ENCODE measurements at regions of chr2 and their contacts with region 1.

Region 1: GRCh38 chr2:177296040-177296439 is 31.5 kb upstream of the NFE2L2 start:
- DNase-seq: peak; percentile 42
- H3K4me3 Mint-ChIP-seq: no peak overlapping the region
- H3K27ac Mint-ChIP-seq: no peak overlapping the region
- H3K4me1 Mint-ChIP-seq: no peaks in the 10 kb centered on the region
- H3K27me3 Mint-ChIP-seq: no peaks in the 10 kb centered on the region
- CTCF ChIP-seq: peak; percentile 32

Region 2: GRCh38 chr2:177229448-177230242 is 66.4 kb before region 1 on chr2:
- CTCF ChIA-PET with region 1: interaction called, 4 read pairs
- POLR2A ChIA-PET with region 1: interaction called, 3 read pairs
- intact Hi-C with region 1: loop called (anchors 2 kb)
- DNase-seq: no peak
- H3K4me3 Mint-ChIP-seq: no peak overlapping the region
- H3K27ac Mint-ChIP-seq: peak overlapping the region; percentile 35
- H3K4me1 Mint-ChIP-seq: peaks cover 21% of the 10 kb centered on the region
- H3K27me3 Mint-ChIP-seq: no peaks in the 10 kb centered on the region
- CTCF ChIP-seq: no peak

Region 3: DNA sequence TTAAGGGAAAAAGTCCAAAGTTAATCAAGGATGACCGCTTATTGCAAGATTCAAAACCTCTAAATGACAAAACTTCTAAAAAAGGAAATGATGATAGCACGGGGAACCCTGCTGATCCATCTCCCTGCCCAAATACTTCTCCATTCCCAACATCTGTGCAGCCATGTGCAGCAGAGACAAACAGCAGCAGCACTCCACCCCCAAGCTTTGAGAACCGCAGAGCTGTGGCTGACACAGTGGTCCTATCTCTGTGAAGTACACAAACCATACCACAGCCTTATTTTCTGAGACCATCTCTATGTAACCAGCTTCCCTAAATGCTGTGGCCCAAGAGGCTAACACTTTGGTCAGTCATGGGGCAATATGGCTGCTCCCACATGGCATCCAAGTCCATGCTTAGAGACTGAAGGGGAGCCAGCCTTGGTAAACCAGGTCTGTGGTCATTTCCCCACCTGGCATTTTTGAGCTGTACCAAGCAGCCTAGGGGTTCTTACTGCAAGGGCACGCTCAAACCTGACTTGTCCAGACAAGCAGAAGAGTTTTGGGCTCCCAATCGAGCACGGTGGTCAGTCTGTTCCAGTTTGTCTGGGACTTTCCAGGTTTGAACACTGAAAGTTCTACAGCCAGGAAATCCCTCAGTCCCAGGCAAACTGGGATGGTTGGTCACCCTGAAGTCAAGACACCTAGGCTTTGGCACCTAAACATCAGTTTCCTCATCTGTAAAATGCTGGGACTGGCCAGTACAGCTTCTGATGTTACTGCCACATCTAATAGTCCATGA is 14.4 kb before region 1 on chr2:
- CTCF ChIA-PET with region 1: interaction called, 17 read pairs
- POLR2A ChIA-PET with region 1: interaction called, 20 read pairs
- intact Hi-C with region 1: no loop called
- DNase-seq: peak; percentile 76
- H3K4me3 Mint-ChIP-seq: no peak overlapping the region
- H3K27ac Mint-ChIP-seq: peak overlapping the region; percentile 54
- H3K4me1 Mint-ChIP-seq: peaks cover 10% of the 10 kb centered on the region
- H3K27me3 Mint-ChIP-seq: no peaks in the 10 kb centered on the region
- CTCF ChIP-seq: no peak

Region 4: GRCh38 chr2:177306550-177306949 is 10.5 kb after region 1 on chr2:
- CTCF ChIA-PET with region 1: interaction called, 16 read pairs
- POLR2A ChIA-PET with region 1: interaction called, 6 read pairs
- intact Hi-C with region 1: no loop called
- DNase-seq: peak; percentile 20
- H3K4me3 Mint-ChIP-seq: no peak overlapping the region
- H3K27ac Mint-ChIP-seq: no peak overlapping the region
- H3K4me1 Mint-ChIP-seq: no peaks in the 10 kb centered on the region
- H3K27me3 Mint-ChIP-seq: no peaks in the 10 kb centered on the region
- CTCF ChIP-seq: no peak

Region 5: DNA sequence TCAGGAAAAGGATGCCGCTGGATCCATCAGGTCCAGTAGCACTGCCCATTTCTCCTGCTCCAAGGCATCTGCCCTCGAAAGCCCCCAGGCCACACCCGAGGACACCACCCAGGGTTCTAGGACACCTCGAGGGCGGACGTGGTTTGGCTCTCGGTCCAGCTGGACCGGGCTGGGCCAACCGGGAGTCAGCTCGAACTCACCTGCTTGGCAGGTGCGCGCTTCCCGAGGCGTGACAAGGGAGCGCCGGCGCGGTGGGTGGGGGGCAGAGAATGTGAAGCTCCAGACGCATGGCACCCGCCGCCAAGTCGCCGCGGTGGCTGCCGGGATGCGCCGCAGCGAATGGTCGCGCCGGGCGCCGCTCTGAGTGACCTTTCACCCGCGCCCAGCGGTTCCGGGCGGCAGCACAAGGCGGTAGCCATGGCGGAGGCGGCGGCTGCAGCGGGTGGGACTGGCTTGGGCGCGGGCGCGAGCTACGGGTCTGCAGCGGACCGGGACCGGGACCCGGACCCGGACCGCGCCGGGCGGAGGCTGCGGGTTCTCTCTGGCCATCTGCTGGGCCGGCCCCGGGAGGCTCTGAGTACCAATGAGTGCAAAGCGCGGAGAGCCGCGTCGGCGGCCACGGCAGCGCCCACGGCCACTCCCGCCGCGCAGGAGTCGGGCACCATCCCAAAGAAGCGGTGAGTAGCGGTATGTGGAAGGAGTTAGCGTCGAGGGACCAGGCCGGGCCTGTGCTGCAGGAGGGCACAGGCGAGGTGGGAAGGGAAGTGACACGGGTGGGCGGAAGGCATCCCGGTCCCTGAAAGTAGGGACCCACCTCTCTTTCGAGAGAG is 96.5 kb after region 1 on chr2 and contains the start of gene AGPS:
- CTCF ChIA-PET with region 1: interaction called, 11 read pairs
- POLR2A ChIA-PET with region 1: no interaction called
- intact Hi-C with region 1: no loop called
- DNase-seq: peak; percentile 71
- H3K4me3 Mint-ChIP-seq: peak within 1 kb of the TSS; percentile 96
- H3K27ac Mint-ChIP-seq: peak within 1 kb of the TSS; percentile 97
- H3K4me1 Mint-ChIP-seq: peaks cover 48% of the 10 kb centered on the region
- H3K27me3 Mint-ChIP-seq: no peaks in the 10 kb centered on the region
- CTCF ChIP-seq: peak; percentile 14
- total RNA-seq, gene AGPS: 49.5 and 50.5 TPM in 2 replicates

Measured in MCF 10A (cell line).